AG04449 (cell line): ENCODE measurements at regions of chrX and their contacts with region 1.

Region 1: GRCh38 chrX:107654872-107655761 is 26.8 kb downstream of the PRPS1 start:
- DNase-seq: no peak
- H3K4me3 ChIP-seq: no peak overlapping the region
- CTCF ChIP-seq: peak; percentile 69

Region 2: DNA sequence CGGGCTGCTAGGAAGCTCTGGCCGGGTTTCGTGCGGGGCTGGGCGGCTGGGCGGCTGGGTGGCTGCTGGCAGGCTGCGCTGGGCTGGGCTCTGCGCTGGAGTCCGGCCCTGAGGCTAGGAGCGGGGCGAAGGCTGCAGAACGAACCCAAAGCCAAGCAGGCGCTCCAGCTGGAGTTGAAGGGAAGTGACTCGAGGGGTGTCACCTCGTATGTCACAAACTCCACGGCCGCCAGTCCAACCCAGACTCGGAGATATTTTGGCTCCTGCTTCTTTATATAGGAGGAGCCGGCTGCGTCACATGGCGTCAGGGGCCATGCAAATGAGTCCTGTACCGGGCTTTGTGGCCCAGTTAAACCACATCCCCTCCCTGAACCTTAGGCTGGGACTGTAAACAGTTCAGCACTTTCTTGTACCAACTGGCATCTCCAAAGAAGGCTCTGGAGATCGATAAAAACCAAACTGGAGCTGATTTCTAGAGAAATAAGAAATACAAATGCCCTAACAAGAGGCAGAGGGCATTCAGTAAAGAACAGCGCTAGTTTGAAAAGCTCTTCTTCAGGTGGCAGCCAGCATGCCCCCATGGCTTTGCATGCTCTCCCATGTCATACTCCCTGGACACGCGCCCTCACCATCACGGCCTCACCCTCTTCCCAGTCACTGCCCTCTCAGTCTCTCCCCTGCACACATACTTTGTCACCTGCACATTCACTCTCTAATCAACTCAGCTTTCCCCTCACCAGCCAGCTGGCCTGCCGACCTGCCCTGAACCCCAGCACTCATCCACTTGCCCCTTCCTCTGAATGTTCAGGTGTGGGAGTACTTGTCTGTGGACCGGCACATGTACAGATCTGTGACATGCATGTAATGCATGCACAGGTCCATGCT is 61.9 kb after region 1 on chrX:
- CTCF ChIA-PET with region 1: interaction called, 97 read pairs
- POLR2A ChIA-PET with region 1: interaction called, 5 read pairs
- DNase-seq: no peak
- H3K4me3 ChIP-seq: peak overlapping the region; percentile 64
- CTCF ChIP-seq: no peak

Region 3: DNA sequence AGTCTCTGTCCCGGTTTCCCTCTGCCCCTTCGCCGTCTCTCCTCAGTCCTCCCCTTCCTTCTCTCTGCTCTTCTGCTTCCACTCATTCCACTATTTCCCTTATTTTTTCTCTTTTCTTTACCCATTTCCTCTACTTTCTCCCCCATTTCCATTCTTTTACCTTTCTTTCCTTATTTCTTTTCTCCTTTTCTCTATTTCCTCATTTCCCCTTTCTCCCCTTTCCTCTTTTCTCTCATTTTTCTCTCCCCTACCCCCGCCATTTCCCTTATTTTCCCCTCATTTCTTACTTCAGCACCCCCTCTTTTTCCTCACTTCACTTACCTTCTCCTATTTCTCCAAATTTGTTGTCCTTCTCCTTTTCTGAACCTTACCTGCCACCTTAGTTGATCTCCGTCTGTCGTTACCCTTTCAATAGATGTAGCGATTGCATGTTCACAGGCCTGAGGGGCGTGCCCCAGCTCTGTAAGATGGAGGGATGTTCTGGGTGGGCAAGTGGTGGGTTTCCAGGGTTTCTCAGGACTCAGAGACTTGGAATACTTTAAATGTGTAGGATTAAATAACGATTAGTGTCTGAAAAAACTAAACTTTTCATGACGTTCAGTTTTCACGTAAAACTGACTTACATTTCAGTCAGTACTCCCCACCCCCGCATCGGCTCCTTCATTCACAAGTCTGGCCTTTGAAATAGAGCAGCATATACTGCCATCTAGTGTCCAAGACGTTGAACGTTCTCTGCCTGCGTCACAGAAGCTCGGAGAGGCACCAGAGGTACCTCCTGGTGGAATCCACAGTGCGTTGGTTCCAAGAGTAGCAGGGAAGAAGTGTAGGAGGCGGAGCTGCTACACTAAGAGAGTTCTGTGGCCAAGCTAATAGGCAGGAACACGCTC is 121.8 kb after region 1 on chrX:
- CTCF ChIA-PET with region 1: interaction called, 123 read pairs
- POLR2A ChIA-PET with region 1: no interaction called
- DNase-seq: peak; percentile 57
- H3K4me3 ChIP-seq: peak overlapping the region; percentile 49
- CTCF ChIP-seq: peak; percentile 50